Activated B cell treated with CpG ODN at 0.5 μM for 24 hours (primary cell): ENCODE measurements at regions of chr14 and their contacts with region 1.

Region 1: GRCh38 chr14:91060351-91061055 is at the start of gene RPS6KA5:
- DNase-seq: peak; percentile 95
- ATAC-seq: peak; percentile 82
- H3K4me3 Mint-ChIP-seq: peak within 1 kb of the TSS; percentile 87
- H3K27ac Mint-ChIP-seq: peak within 1 kb of the TSS; percentile 78
- H3K4me1 Mint-ChIP-seq: peaks cover 41% of the 10 kb centered on the region
- H3K27me3 Mint-ChIP-seq: no peaks in the 10 kb centered on the region
- CTCF ChIP-seq: no peak
- total RNA-seq, gene RPS6KA5: 13.3 and 16.3 TPM in 2 replicates

Region 2: DNA sequence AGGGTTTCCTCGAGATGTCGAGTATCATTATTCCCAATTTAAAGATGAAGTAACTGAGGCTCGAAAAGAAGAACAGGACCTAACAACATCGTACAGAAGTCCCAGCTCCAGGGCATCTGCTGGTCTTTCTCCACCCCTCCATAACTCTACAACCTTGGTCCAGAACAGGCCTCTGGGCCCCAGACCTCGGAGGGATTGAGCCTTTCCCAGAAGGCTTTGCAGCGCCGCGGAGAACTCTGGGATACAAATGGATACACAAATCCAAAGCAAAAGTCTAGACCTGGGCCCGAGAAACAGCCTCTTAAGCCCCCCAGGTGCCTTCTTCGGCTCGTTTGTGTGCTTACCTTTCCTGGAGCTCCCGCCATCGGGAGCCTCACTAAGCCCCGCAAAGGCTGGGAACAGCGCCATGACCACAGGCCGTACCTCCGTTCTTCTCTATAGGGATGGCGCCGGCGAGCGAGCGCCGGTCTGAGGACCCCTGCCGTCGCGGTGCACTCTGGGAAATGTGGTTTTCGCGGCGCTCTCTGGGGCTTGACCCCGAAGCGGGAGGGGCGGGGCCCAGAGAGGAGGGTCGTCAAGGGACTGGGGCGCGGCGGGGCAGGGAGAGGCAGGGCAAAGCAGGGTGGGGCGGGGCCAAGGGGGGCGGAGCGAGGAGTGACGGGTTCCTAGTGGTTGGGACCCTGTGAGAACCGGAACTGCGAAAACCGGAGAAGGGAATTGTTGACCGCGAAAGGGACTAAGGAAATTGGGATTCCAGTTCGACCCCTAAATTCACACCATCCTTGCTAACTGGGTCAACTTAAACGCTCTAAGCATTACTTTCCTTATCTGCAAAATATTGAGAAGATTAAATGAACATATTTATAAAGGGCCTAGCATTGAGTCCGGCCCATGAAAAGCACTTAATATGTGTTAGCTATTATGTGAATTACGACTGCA is 728.7 kb before region 1 on chr14 and contains the start of gene NRDE2:
- CTCF ChIA-PET with region 1: no interaction called
- POLR2A ChIA-PET with region 1: no interaction called
- intact Hi-C with region 1: loop called (anchors 5 kb)
- DNase-seq: peak; percentile 95
- ATAC-seq: peak; percentile 98
- H3K4me3 Mint-ChIP-seq: peak within 1 kb of the TSS; percentile 93
- H3K27ac Mint-ChIP-seq: peak within 1 kb of the TSS; percentile 95
- H3K4me1 Mint-ChIP-seq: peaks cover 25% of the 10 kb centered on the region
- H3K27me3 Mint-ChIP-seq: peaks cover 19% of the 10 kb centered on the region
- CTCF ChIP-seq: no peak
- total RNA-seq, gene NRDE2: 35.3 and 37.1 TPM in 2 replicates

Region 3: DNA sequence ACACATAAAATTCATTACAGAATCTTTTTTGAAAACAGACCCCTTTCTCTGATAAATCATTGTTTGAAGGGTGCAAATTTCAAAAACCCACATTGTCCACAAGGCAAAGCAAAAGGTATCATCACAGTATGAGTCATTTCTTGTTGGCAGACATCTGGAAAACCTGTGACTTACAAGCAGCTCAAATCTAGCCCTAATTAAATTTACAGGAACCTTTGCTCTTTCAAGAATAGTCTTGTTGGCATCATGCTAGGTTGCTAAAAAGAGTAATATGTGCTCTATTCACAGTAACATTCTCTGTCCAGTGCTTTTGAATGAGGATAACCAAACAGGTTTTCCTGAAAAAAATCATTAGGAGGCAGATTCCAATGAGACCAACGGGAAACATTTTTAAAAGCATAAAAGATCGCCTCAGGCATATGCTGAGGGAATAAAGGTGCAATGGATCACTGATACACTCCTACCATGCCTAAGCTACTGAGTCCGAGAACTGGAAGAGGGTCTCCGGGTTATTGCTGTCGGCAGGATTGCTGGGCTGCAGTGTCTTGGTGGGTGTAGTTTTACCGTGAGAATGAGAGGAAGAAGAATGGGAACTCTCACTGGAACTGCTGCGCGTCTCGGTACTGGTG is 188.8 kb before region 1 on chr14:
- CTCF ChIA-PET with region 1: no interaction called
- POLR2A ChIA-PET with region 1: no interaction called
- intact Hi-C with region 1: no loop called
- DNase-seq: no peak
- ATAC-seq: no peak
- H3K4me3 Mint-ChIP-seq: no peak overlapping the region
- H3K27ac Mint-ChIP-seq: no peak overlapping the region
- H3K4me1 Mint-ChIP-seq: no peaks in the 10 kb centered on the region
- H3K27me3 Mint-ChIP-seq: no peaks in the 10 kb centered on the region
- CTCF ChIP-seq: no peak

Region 4: GRCh38 chr14:90903101-90903500 is 157.4 kb before region 1 on chr14:
- CTCF ChIA-PET with region 1: interaction called, 17 read pairs
- POLR2A ChIA-PET with region 1: interaction called, 4 read pairs
- intact Hi-C with region 1: loop called (anchors 1 kb)
- DNase-seq: no peak
- ATAC-seq: peak; percentile 66
- H3K4me3 Mint-ChIP-seq: no peak overlapping the region
- H3K27ac Mint-ChIP-seq: no peak overlapping the region
- H3K4me1 Mint-ChIP-seq: peaks cover 14% of the 10 kb centered on the region
- H3K27me3 Mint-ChIP-seq: no peaks in the 10 kb centered on the region
- CTCF ChIP-seq: peak; percentile 89

Region 5: DNA sequence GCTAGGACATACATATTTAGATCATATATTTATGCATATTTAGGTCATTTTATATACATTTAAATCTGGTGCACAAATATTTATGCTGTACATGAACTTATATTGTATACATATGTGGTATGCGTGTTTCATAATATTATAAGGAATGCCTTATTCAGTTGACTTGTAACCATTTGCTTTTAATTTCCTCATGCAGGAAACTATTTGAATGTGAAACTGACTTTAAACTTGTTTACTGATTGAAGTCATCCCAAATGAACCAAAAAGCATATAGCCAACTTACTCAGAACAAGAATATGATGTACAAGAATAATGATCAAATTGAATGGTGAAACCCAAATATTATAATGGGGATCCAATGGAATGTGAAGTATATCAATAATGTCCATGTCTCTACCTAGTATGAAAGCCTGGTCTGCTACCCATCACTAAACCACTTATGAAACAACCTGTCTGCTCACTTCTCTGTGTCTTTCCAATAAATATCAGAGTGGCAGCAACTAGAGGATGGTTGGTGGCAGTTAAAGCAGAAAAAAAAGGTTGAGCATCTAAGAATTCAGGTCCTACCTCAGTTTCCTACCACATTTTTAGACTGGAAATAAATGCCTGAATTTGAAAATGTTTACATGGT is 38.4 kb before region 1 on chr14:
- CTCF ChIA-PET with region 1: no interaction called
- POLR2A ChIA-PET with region 1: interaction called, 16 read pairs
- intact Hi-C with region 1: loop called (anchors 1 kb)
- DNase-seq: no peak
- ATAC-seq: peak; percentile 65
- H3K4me3 Mint-ChIP-seq: peak overlapping the region; percentile 79
- H3K27ac Mint-ChIP-seq: peak overlapping the region; percentile 92
- H3K4me1 Mint-ChIP-seq: peaks cover 61% of the 10 kb centered on the region
- H3K27me3 Mint-ChIP-seq: no peaks in the 10 kb centered on the region
- CTCF ChIP-seq: no peak

Region 6: GRCh38 chr14:91075553-91075952 is 15.1 kb after region 1 on chr14:
- CTCF ChIA-PET with region 1: no interaction called
- POLR2A ChIA-PET with region 1: no interaction called
- intact Hi-C with region 1: no loop called
- DNase-seq: no peak
- ATAC-seq: no peak
- H3K4me3 Mint-ChIP-seq: no peak overlapping the region
- H3K27ac Mint-ChIP-seq: no peak overlapping the region
- H3K4me1 Mint-ChIP-seq: peaks cover 3% of the 10 kb centered on the region
- H3K27me3 Mint-ChIP-seq: no peaks in the 10 kb centered on the region
- CTCF ChIP-seq: no peak

Region 7: DNA sequence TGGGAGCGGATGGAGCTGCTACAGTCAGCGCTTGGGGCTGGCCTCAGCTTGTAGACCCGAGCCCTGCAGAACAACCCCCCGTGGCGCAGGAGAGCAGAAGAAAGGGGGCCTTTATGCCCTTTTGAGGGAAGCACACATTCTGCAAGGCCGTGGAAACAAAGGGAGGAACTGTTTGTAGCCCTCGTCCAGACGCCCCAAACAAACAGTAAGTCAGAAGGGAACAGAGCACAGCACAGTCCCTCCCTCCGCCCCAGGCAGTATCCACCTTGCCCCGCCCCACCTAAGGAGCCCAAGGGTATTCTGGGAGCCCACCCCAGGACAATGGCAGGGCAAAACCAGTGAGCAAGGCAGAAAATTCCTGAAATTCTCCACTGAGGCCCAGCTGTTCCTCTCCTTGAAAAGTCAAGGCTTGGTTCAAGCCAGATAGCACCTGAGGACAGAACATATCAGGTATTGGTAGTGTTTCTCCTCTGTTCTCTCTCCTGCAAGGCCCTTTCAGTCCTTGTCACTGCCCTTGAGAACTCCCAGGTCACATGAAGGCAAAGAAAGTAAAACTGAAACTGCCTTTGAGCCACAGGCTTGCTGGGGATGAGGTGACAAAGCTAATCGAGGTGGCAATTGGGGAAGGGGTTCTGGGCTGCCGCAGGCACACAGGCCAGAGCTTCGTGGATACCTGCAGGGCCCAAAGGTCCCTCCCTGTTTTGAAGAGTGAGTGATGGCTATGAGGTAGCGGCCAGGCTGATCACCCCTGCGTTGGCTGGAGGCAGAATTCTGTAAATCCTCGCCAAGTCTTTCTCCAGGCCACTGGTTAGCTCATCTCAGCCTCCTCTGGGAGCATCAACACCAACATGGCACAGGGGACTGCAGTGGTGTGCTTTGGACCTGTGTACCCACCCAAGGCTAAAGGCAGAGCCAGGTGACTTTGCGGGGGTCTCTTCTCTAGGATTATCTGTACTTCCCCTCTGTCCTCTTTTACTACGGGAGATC is 53.9 kb after region 1 on chr14:
- CTCF ChIA-PET with region 1: interaction called, 21 read pairs
- POLR2A ChIA-PET with region 1: interaction called, 90 read pairs
- intact Hi-C with region 1: loop called (anchors 1 kb)
- DNase-seq: peak; percentile 54
- ATAC-seq: peak; percentile 84
- H3K4me3 Mint-ChIP-seq: peak overlapping the region; percentile 98
- H3K27ac Mint-ChIP-seq: peak overlapping the region; percentile 98
- H3K4me1 Mint-ChIP-seq: peaks cover 67% of the 10 kb centered on the region
- H3K27me3 Mint-ChIP-seq: no peaks in the 10 kb centered on the region
- CTCF ChIP-seq: no peak

Region 8: DNA sequence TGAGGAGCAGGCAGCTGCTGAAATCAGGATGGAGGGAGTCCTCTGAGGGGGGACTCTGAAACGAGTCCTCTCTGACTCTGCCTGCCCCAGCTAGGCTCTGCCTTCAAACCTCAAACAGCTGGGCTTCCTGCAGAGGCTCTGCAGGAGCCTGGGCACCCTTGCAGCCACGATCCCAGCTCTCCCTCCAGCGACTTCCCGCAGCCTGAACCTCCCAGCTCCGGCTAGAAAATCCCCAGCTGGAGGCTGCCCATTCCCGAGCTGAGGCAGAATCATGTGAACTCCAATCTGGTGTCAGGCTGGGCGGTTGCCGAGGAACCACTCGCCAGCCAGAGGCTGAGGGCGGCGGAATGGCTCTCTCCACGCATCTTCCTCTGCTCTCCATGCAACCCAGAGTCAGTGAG is 184.0 kb after region 1 on chr14 and contains the start of gene GPR68:
- CTCF ChIA-PET with region 1: no interaction called
- POLR2A ChIA-PET with region 1: interaction called, 3 read pairs
- intact Hi-C with region 1: loop called (anchors 2 kb)
- DNase-seq: no peak
- ATAC-seq: no peak
- H3K4me3 Mint-ChIP-seq: peak within 1 kb of the TSS; percentile 75
- H3K27ac Mint-ChIP-seq: peak within 1 kb of the TSS; percentile 91
- H3K4me1 Mint-ChIP-seq: peaks cover 61% of the 10 kb centered on the region
- H3K27me3 Mint-ChIP-seq: no peaks in the 10 kb centered on the region
- CTCF ChIP-seq: no peak
- total RNA-seq, gene GPR68: 1.4 and 1.8 TPM in 2 replicates

Region 9: DNA sequence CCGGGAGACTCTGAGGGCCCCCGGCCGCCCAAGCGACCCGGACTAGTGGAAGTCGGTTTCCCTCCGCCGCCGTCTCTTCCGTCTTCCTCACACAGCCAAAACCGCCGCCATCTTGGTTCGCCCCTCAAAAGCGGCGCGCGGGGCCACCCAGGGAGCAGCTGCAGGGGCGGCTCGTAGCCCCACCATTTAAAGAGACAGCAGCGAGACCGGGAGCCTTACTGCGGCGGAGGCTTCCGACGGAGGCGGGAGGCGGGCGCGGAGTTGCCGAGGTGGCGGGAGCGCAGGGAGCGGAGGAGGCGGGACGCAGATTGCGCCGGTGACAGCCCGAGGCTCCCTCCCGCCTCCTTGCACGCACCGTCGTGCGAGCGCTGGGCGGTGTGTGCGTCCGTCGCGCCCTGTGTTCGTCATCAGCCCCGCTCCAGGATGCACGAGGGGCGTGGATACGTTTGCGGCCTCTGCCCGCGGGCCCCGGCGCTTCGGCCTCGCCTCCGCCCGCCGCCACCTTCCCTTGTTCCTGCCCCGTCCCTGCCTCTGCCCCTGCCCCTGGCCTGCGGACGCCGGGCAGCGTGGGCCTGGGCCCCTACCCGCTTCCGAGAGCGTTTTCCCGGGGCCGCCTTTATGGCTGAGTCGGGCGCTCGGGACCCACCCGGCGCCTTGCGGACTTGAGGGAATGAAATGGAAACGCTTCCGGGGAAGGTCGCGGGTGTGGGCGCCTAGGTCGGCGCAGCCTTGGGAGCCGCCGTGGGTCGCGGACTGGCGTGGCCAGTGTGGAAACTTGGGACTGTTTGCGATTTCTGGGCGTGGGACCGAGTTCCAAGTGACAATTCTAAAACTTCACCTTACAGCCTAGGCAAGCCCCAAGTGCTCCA is 449.9 kb after region 1 on chr14 and contains the start of gene PPP4R3A:
- CTCF ChIA-PET with region 1: no interaction called
- POLR2A ChIA-PET with region 1: interaction called, 5 read pairs
- intact Hi-C with region 1: loop called (anchors 1 kb)
- DNase-seq: peak; percentile 91
- ATAC-seq: peak; percentile 85
- H3K4me3 Mint-ChIP-seq: peak within 1 kb of the TSS; percentile 99
- H3K27ac Mint-ChIP-seq: peak within 1 kb of the TSS; percentile 100
- H3K4me1 Mint-ChIP-seq: peaks cover 32% of the 10 kb centered on the region
- H3K27me3 Mint-ChIP-seq: peaks cover 2% of the 10 kb centered on the region
- CTCF ChIP-seq: no peak
- total RNA-seq, gene PPP4R3A: 138 and 141 TPM in 2 replicates